CD4-positive, alpha-beta memory T cell (primary cell): ENCODE measurements at regions of chr1 and their contacts with region 1.

Region 1: GRCh38 chr1:92944901-92945747 is 16.1 kb downstream of the DIPK1A start:
- DNase-seq: no peak
- H3K4me3 ChIP-seq: no peak overlapping the region
- H3K4me3 Mint-ChIP-seq: peak overlapping the region in 2 of 8 donors; percentile 4 to 17
- H3K27ac ChIP-seq: no peak overlapping the region
- H3K27ac Mint-ChIP-seq: peak overlapping the region in 2 of 7 donors; percentile 12 to 23
- H3K4me1 ChIP-seq: peaks cover 46% of the 10 kb centered on the region
- H3K4me1 Mint-ChIP-seq: peaks cover 39 to 56% (median 48%) of the 10 kb centered on the region in 4 donors
- H3K27me3 ChIP-seq: no peaks in the 10 kb centered on the region
- H3K27me3 Mint-ChIP-seq: no peaks in the 10 kb centered on the region

Region 2: GRCh38 chr1:92909321-92909720 is 35.8 kb before region 1 on chr1:
- CTCF ChIA-PET with region 1: interaction called, 4 read pairs
- POLR2A ChIA-PET with region 1: no interaction called
- intact Hi-C with region 1: loop called (anchors 5 kb)
- DNase-seq: no peak
- H3K4me3 ChIP-seq: no peak overlapping the region
- H3K4me3 Mint-ChIP-seq: no peak overlapping the region
- H3K27ac ChIP-seq: no peak overlapping the region
- H3K27ac Mint-ChIP-seq: peak overlapping the region in 1 of 7 donors; percentile 18
- H3K4me1 ChIP-seq: peaks cover 5% of the 10 kb centered on the region
- H3K4me1 Mint-ChIP-seq: peaks cover 30 to 39% (median 36%) of the 10 kb centered on the region in 4 donors
- H3K27me3 ChIP-seq: no peaks in the 10 kb centered on the region
- H3K27me3 Mint-ChIP-seq: no peaks in the 10 kb centered on the region

Region 3: GRCh38 chr1:93447516-93448291 is 502.6 kb after region 1 on chr1 and contains the start of gene FNBP1L:
- CTCF ChIA-PET with region 1: no interaction called
- POLR2A ChIA-PET with region 1: no interaction called
- intact Hi-C with region 1: no loop called
- DNase-seq: peak; percentile 46 to 59 (median 54)
- H3K4me3 ChIP-seq: peak within 1 kb of the TSS; percentile 30 to 57
- H3K4me3 Mint-ChIP-seq: peak within 1 kb of the TSS; percentile 93 to 99 (median 96)
- H3K27ac ChIP-seq: no peak within 1 kb of the TSS
- H3K27ac Mint-ChIP-seq: peak within 1 kb of the TSS; percentile 59 to 90 (median 83)
- H3K4me1 ChIP-seq: peaks cover 13% of the 10 kb centered on the region
- H3K4me1 Mint-ChIP-seq: peaks cover 16 to 22% (median 19%) of the 10 kb centered on the region in 4 donors
- H3K27me3 ChIP-seq: peaks cover 23% of the 10 kb centered on the region
- H3K27me3 Mint-ChIP-seq: peaks cover 21 to 32% of the 10 kb centered on the region in 2 donors
- total RNA-seq, gene FNBP1L: 1.8 to 2.2 TPM